Breast epithelium (tissue), 4 donors: ENCODE measurements at regions of chr4 and their contacts with region 1.

Region 1: GRCh38 chr4:47002593-47002992 is 9.2 kb upstream of the GABRA4 start:
- DNase-seq: no peak
- H3K4me3 ChIP-seq: no peak overlapping the region
- H3K27ac ChIP-seq: no peak overlapping the region
- H3K4me1 ChIP-seq: no peaks in the 10 kb centered on the region
- H3K27me3 ChIP-seq: no peaks in the 10 kb centered on the region
- CTCF ChIP-seq: no peak
- POLR2A ChIP-seq: no peak

Region 2: GRCh38 chr4:46927201-46927600 is 75.4 kb before region 1 on chr4:
- intact Hi-C with region 1: loop called (anchors 5 kb)
- DNase-seq: no peak
- H3K4me3 ChIP-seq: no peak overlapping the region
- H3K27ac ChIP-seq: no peak overlapping the region
- H3K4me1 ChIP-seq: no peaks in the 10 kb centered on the region
- H3K27me3 ChIP-seq: no peaks in the 10 kb centered on the region
- CTCF ChIP-seq: no peak
- POLR2A ChIP-seq: no peak

Region 3: DNA sequence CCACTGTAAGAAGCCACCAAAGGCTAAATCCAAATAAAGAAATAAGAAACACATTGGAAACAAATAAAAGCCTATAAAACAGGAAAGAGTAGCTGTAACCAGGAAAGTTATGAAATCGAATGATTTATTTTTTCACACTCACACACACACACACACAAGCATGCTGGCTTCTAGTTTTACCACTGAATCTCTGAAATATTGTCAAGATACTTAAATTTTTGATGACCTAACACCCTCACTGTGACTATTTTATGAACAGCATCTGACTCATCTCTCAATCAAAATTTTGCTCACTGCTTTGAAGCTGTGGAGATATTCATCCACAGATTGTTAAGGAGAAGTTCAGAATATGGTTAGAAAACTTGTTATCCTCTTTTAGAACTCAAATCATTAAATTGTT is 14.9 kb after region 1 on chr4:
- intact Hi-C with region 1: loop called (anchors 2 kb)
- DNase-seq: no peak
- H3K4me3 ChIP-seq: no peak overlapping the region
- H3K27ac ChIP-seq: no peak overlapping the region
- H3K4me1 ChIP-seq: no peaks in the 10 kb centered on the region
- H3K27me3 ChIP-seq: no peaks in the 10 kb centered on the region
- CTCF ChIP-seq: no peak
- POLR2A ChIP-seq: no peak